Adrenal gland (tissue), 19 donors: ENCODE measurements at regions of chr6 and their contacts with region 1.

Region 1: GRCh38 chr6:146857180-146857979 is 258.6 kb downstream of the ADGB start:
- DNase-seq: peak; percentile 88 to 96 (median 90)
- H3K4me3 ChIP-seq: peak overlapping the region in 1 of 4 donors; percentile 47
- H3K27ac ChIP-seq: peak overlapping the region in 3 of 5 donors; percentile 24 to 75 (median 73)
- H3K4me1 ChIP-seq: peaks cover 0 to 8% of the 10 kb centered on the region in 2 donors
- H3K27me3 ChIP-seq: no peaks in the 10 kb centered on the region
- CTCF ChIP-seq: peak; percentile 97 to 100 (median 99)
- POLR2A ChIP-seq: peak in 1 of 2 donors; percentile 24

Region 2: GRCh38 chr6:146582885-146583284 is 274.5 kb before region 1 on chr6:
- intact Hi-C with region 1: no loop called
- DNase-seq: peak; percentile 31 to 69 (median 52)
- H3K4me3 ChIP-seq: no peak overlapping the region
- H3K27ac ChIP-seq: no peak overlapping the region
- H3K4me1 ChIP-seq: no peaks in the 10 kb centered on the region
- H3K27me3 ChIP-seq: no peaks in the 10 kb centered on the region
- CTCF ChIP-seq: no peak
- POLR2A ChIP-seq: no peak

Region 3: GRCh38 chr6:147202516-147203312 is 345.3 kb after region 1 on chr6:
- intact Hi-C with region 1: loop called in 1 of 2 experiments (anchors 5 kb)
- DNase-seq: peak; percentile 89 to 97 (median 92)
- H3K4me3 ChIP-seq: peak overlapping the region; percentile 29 to 93 (median 55)
- H3K27ac ChIP-seq: peak overlapping the region; percentile 69 to 97 (median 95)
- H3K4me1 ChIP-seq: peaks cover 4 to 25% of the 10 kb centered on the region in 2 donors
- H3K27me3 ChIP-seq: no peaks in the 10 kb centered on the region
- CTCF ChIP-seq: no peak
- POLR2A ChIP-seq: peak; percentile 72 to 91

Region 4: GRCh38 chr6:147285087-147285855 is 427.9 kb after region 1 on chr6:
- intact Hi-C with region 1: loop called in 1 of 2 experiments (anchors 10 kb)
- DNase-seq: no peak
- H3K4me3 ChIP-seq: no peak overlapping the region
- H3K27ac ChIP-seq: peak overlapping the region in 3 of 5 donors; percentile 7 to 23 (median 7)
- H3K4me1 ChIP-seq: peaks cover 9 to 14% of the 10 kb centered on the region in 2 donors
- H3K27me3 ChIP-seq: no peaks in the 10 kb centered on the region
- CTCF ChIP-seq: peak; percentile 37 to 66 (median 48)
- POLR2A ChIP-seq: no peak

Region 5: DNA sequence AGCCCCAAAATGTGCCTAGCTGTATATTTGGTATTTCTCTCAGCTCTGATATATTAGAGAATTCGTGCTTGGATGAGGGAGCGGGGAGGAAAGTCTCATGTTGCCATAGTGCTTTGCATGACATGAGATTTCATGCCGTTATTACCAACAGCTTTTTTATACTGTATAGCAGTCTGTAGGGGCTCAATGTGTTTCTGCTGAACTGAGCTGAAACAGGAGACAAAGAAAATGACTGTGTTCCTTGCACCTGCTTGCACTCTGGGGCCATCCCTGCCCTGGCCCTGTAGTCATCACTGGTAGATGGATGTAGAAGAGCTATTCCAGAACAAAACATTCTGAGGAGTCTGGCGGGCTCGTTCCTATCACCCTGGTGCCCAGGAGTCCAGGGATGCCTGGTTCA is 1357.3 kb after region 1 on chr6:
- intact Hi-C with region 1: no loop called
- DNase-seq: no peak
- H3K4me3 ChIP-seq: no peak overlapping the region
- H3K27ac ChIP-seq: no peak overlapping the region
- H3K4me1 ChIP-seq: no peaks in the 10 kb centered on the region
- H3K27me3 ChIP-seq: no peaks in the 10 kb centered on the region
- CTCF ChIP-seq: no peak
- POLR2A ChIP-seq: no peak